ENCODE measurements at regions of chr15 and their contacts with region 1.

Region 1: DNA sequence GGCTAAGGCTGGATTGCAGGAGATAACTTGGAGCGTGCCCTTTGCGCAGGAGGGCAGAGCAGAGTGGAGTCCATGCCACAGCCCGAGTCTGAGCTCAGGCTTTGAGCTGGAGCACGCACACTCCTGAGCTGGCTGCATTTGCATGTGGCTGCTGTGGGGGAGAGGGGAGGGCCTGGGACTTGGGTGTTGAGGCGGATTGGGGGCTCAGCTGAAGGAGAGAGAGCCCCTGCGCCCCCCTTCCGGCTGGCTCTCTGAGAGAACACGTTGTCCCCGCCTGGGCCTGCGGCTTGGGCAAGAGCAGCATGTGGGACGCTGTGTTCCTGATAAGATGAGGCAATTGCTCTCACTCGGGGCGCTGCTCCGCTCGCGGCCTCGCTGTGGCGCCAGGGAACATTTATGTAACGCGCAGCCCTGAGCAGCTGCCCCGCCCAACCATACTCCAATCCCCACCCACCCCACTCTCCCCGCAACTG is 39.1 kb downstream of the KLF13 start:
- DNase-seq: no peak
- H3K4me3 ChIP-seq: no peak overlapping the region
- CTCF ChIP-seq: peak; percentile 47

Region 2: DNA sequence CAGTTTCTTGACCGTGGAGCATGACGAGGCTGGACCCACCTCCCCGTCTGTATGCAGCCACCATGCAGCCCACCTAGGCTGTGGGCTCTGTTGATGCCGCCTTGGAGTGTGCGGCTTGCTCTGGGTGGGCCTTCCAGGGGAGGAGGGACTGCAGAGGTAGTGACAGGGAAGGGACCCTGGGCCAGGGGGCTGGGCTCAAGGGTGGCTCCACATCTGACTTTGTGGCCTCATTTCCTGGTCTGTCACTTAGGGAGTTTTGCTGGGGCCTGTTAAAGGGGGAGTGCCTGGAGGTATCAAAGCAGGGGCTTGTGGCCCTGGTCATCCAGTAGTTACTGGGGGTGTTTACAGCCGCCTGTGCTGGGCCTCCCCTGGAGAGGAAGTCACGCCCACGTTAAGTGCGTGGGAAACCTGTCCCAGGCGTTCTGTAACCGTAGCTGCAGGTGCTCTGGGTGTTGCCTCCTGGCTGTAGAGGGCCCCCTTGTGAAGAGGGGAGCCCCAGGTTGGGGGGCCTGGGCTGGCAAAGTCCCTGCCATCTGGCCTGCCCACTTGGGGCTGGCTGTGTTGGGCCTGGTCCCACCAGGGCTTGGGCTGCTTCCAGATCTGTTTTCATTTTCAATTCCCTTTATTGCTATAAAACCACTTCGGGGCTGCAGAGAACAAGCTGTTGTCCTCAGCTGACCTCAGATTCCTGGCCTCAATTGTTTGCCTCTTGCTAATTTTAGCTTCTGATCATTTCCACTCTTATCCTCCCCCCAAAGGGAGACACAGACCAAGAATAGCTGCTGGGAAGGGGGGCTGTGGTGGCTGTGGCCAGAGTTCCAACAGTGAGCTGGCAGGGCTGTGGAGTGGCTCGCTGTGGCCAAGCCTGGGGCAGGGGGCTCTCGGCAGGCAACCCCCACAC is 12.5 kb before region 1 on chr15:
- CTCF ChIA-PET with region 1: interaction called, 24 read pairs
- POLR2A ChIA-PET with region 1: interaction called, 6 read pairs
- DNase-seq: peak; percentile 67
- H3K4me3 ChIP-seq: peak overlapping the region; percentile 3
- CTCF ChIP-seq: no peak

Measured in AG04449 (cell line).